ENCODE measurements at regions of chr20 and their contacts with region 1.

Region 1: GRCh38 chr20:53915446-53916172 is 154.8 kb downstream of the BCAS1 start:
- DNase-seq: peak; percentile 95
- ATAC-seq: peak; percentile 96 to 97
- H3K4me3 ChIP-seq: peak overlapping the region; percentile 72
- H3K27ac ChIP-seq: peak overlapping the region; percentile 89
- H3K4me1 ChIP-seq: peaks cover 33% of the 10 kb centered on the region
- H3K27me3 ChIP-seq: no peaks in the 10 kb centered on the region
- CTCF ChIP-seq: peak; percentile 93

Region 2: DNA sequence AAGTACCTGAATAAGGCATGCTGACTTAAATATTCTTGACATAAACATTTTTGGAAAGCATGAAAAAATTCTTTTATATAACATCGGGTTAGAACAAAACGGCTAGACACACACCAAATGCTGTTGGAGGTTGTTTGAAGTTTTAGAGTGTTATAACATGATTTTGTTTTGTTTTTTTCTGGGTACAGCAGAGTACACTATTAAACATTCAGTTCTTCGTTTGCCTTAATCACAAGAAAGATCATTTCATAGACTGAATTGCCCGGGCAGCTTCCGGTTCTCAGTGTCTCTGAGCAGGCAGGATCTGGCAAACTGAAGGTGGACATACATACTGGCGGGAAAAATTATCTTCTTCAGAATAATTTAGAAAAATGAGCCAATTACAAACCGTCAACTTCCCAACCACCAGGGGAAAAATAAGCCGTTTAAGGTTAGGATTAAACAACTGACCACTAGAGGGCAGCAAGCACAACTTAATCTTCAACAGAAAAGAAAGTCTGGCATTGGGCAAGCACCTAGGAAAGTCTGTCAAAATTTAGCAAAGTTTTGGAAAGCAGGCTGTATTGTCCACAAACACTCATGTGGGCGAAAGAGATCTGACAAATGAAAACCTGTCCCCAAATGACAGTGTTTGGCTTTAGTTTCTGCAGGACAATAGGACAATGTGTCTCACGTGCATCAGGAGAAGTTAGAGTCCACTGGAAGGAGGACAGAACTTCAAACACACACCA is 337.0 kb before region 1 on chr20:
- intact Hi-C with region 1: loop called (anchors 10 kb)
- DNase-seq: no peak
- ATAC-seq: peak; percentile 78 to 80
- H3K4me3 ChIP-seq: peak overlapping the region; percentile 37
- H3K27ac ChIP-seq: peak overlapping the region; percentile 74
- H3K4me1 ChIP-seq: peaks cover 62% of the 10 kb centered on the region
- H3K27me3 ChIP-seq: no peaks in the 10 kb centered on the region
- CTCF ChIP-seq: peak; percentile 80

Region 3: GRCh38 chr20:53677447-53678314 is 237.9 kb before region 1 on chr20:
- intact Hi-C with region 1: no loop called
- DNase-seq: peak; percentile 48
- ATAC-seq: peak; percentile 21 to 54
- H3K4me3 ChIP-seq: no peak overlapping the region
- H3K27ac ChIP-seq: peak overlapping the region; percentile 60
- H3K4me1 ChIP-seq: peaks cover 32% of the 10 kb centered on the region
- H3K27me3 ChIP-seq: no peaks in the 10 kb centered on the region
- CTCF ChIP-seq: no peak

Measured in lower lobe of right lung (tissue), 2 donors.